ENCODE measurements at regions of chr22 and their contacts with region 1.

Region 1: GRCh38 chr22:24503137-24503842 is 8.2 kb downstream of the UPB1 start:
- DNase-seq: peak; percentile 43 to 80
- ATAC-seq: peak; percentile 81 to 88 (median 86)
- H3K4me3 ChIP-seq: no peak overlapping the region
- H3K4me3 Mint-ChIP-seq: no peak overlapping the region
- H3K27ac ChIP-seq: no peak overlapping the region
- H3K27ac Mint-ChIP-seq: peak overlapping the region in 1 of 2 donors; percentile 3
- H3K4me1 ChIP-seq: peaks cover 18% of the 10 kb centered on the region
- H3K4me1 Mint-ChIP-seq: peaks cover 10 to 11% of the 10 kb centered on the region in 2 donors
- H3K27me3 ChIP-seq: no peaks in the 10 kb centered on the region
- H3K27me3 Mint-ChIP-seq: peaks cover 0 to 3% of the 10 kb centered on the region in 2 donors
- CTCF ChIP-seq: peak; percentile 41

Region 2: DNA sequence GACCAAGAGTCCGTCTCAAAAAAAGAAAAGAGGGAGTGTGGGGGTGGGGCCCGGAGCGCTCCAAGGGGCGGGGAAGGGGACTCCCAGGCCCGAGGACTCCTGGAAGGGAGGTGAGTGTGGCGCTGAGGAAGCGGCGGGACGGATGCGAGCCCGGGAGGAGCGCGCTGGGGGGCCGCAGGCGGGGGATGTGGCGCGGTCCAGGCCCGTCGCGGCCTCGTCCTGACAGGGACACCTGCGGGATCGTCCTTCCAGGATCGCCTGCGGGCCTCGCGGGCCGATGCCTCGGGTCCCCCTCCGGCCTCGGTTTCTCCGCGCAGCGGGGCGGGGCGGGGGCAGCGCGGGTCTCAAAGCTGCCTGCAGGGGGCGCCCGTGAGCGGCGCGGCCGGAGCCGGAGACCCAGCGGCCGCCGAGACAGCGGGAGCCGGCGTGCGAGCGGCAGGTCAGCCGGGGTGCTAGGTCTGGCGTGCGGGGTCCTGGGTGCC is 79.7 kb before region 1 on chr22:
- intact Hi-C with region 1: loop called (anchors 2 kb)
- DNase-seq: peak; percentile 72 to 81
- ATAC-seq: peak; percentile 55 to 71 (median 71)
- H3K4me3 ChIP-seq: no peak overlapping the region
- H3K4me3 Mint-ChIP-seq: peak overlapping the region; percentile 71
- H3K27ac ChIP-seq: no peak overlapping the region
- H3K27ac Mint-ChIP-seq: no peak overlapping the region
- H3K4me1 ChIP-seq: peaks cover 47% of the 10 kb centered on the region
- H3K4me1 Mint-ChIP-seq: peaks cover 32 to 37% of the 10 kb centered on the region in 2 donors
- H3K27me3 ChIP-seq: no peaks in the 10 kb centered on the region
- H3K27me3 Mint-ChIP-seq: peaks cover 9 to 14% of the 10 kb centered on the region in 2 donors
- CTCF ChIP-seq: peak; percentile 85

Region 3: DNA sequence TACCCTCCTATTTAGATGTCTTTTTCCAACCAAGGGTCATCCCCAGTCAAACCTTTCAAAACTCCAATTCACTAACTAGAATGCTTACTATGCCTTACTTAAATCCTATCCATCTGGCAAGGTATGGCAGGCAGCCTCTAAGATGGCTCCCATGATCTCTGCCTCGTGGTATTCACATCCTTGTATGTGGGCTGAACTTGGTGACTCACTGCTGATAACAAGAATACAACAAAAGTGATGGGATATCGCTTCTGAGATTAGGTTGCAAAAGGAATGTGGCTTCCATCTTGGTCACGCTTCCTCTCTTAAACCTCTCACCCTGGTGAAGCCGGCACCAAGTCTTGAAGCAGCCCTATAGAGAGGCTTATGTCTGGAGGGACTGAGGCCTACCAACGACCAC is 37.7 kb before region 1 on chr22:
- intact Hi-C with region 1: no loop called
- DNase-seq: no peak
- ATAC-seq: no peak
- H3K4me3 ChIP-seq: no peak overlapping the region
- H3K4me3 Mint-ChIP-seq: no peak overlapping the region
- H3K27ac ChIP-seq: no peak overlapping the region
- H3K27ac Mint-ChIP-seq: no peak overlapping the region
- H3K4me1 ChIP-seq: no peaks in the 10 kb centered on the region
- H3K4me1 Mint-ChIP-seq: no peaks in the 10 kb centered on the region
- H3K27me3 ChIP-seq: no peaks in the 10 kb centered on the region
- H3K27me3 Mint-ChIP-seq: no peaks in the 10 kb centered on the region
- CTCF ChIP-seq: no peak